ENCODE measurements at regions of chr12 and their contacts with region 1.

Region 1: GRCh38 chr12:106645074-106645421 is 62.2 kb downstream of the RFX4 start:
- DNase-seq: peak; percentile 93
- H3K4me3 Mint-ChIP-seq: peak overlapping the region; percentile 39
- H3K27ac Mint-ChIP-seq: peak overlapping the region; percentile 91
- H3K4me1 Mint-ChIP-seq: peaks cover 73% of the 10 kb centered on the region
- H3K27me3 Mint-ChIP-seq: no peaks in the 10 kb centered on the region
- CTCF ChIP-seq: no peak

Region 2: DNA sequence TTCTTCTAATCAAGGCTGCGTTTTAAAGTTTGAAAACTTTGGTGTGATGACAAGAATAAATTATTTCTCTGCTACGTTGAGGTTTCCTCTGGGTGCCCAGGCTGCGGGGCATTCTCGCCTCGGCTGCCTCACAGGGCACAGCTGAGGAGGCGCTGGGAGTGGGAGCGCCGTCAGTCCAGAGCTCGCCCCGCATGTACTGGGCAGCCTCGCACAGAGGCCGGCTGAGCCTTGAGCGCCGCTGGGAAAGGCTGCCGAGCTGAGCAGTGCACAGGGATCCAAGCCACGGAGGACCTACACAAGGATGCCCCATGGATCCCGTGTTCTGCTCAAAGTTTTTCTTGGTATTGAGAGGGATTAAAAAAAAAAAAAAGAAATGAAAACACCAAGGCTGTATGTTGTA is 50.6 kb before region 1 on chr12:
- CTCF ChIA-PET with region 1: interaction called, 11 read pairs
- intact Hi-C with region 1: loop called (anchors 5 kb)
- DNase-seq: no peak
- H3K4me3 Mint-ChIP-seq: no peak overlapping the region
- H3K27ac Mint-ChIP-seq: no peak overlapping the region
- H3K4me1 Mint-ChIP-seq: peaks cover 10% of the 10 kb centered on the region
- H3K27me3 Mint-ChIP-seq: peaks cover 10% of the 10 kb centered on the region
- CTCF ChIP-seq: no peak

Region 3: GRCh38 chr12:106629797-106630659 is 15.0 kb before region 1 on chr12:
- CTCF ChIA-PET with region 1: interaction called, 6 read pairs
- intact Hi-C with region 1: loop called (anchors 2 kb)
- DNase-seq: peak; percentile 30
- H3K4me3 Mint-ChIP-seq: no peak overlapping the region
- H3K27ac Mint-ChIP-seq: peak overlapping the region; percentile 78
- H3K4me1 Mint-ChIP-seq: peaks cover 88% of the 10 kb centered on the region
- H3K27me3 Mint-ChIP-seq: no peaks in the 10 kb centered on the region
- CTCF ChIP-seq: no peak

Region 4: DNA sequence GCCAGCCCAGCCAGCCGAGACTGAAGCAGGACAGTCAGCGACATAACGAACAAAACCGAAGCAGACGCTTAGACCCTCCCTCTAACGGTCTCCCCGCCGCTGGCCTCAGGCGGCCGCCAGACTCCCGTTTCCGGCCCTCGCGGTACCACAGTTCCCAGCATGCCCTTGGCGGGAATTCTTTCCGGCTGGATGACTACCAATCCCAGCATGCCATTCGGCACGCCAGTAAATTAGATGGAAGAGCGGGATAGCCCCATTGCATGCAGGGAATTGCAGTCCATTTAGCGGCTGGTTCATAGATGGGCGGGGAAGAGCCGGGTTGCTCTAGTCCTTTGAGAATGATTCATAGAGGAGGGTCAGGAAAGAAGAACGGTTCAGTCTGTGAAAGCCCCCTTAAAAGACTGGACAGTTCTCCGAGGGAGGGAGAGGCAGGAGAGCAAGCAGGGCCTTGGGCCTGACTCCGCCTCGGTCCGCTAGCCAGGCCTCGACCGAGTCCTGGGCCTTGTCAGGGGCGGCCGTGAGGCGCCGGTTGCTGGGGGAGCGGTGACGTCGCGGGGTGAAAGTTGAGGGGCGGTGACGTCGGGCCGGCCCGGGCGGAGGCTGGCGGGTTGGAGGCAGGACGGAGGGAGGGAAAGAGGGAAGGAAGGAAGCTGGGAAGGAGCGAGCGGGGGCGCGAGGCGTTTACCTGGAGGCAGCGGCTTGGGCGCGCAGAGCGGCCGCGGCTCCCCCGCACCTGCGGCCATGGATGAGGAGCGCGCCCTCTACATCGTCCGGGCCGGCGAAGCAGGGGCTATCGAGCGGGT is 129.2 kb after region 1 on chr12 and contains the start of gene RIC8B:
- CTCF ChIA-PET with region 1: interaction called, 4 read pairs
- intact Hi-C with region 1: loop called (anchors 2 kb)
- DNase-seq: peak; percentile 98
- H3K4me3 Mint-ChIP-seq: peak within 1 kb of the TSS; percentile 95
- H3K27ac Mint-ChIP-seq: peak within 1 kb of the TSS; percentile 97
- H3K4me1 Mint-ChIP-seq: peaks cover 47% of the 10 kb centered on the region
- H3K27me3 Mint-ChIP-seq: no peaks in the 10 kb centered on the region
- CTCF ChIP-seq: no peak
- total RNA-seq, gene RIC8B: 28.5 and 30.9 TPM in 2 replicates